MCF 10A (cell line): ENCODE measurements at regions of chrX and their contacts with region 1.

Region 1: DNA sequence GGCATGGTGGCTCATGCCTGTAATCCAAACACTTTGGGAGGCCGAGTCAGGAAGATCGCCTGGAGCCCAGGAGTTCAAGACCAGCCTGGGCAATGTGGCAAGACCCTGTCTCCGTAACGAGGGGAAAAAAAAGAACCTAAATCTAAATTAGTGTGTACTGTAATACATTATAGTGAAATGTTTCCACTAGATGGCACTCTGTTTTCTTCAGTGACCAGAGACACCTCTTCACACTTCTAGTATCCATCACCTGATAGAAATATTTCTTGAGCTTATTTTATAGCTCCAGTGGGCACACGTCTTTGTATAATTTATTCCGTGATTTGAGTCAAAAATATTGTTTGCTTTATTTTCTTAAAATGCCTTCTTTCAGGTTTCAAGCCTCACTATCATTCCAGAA is 600.9 kb upstream of the DIPK2B start:
- DNase-seq: peak; percentile 66
- H3K4me3 Mint-ChIP-seq: peak overlapping the region; percentile 47
- H3K27ac Mint-ChIP-seq: peak overlapping the region; percentile 67
- H3K4me1 Mint-ChIP-seq: peaks cover 24% of the 10 kb centered on the region
- H3K27me3 Mint-ChIP-seq: peaks cover 49% of the 10 kb centered on the region
- CTCF ChIP-seq: peak; percentile 46

Region 2: DNA sequence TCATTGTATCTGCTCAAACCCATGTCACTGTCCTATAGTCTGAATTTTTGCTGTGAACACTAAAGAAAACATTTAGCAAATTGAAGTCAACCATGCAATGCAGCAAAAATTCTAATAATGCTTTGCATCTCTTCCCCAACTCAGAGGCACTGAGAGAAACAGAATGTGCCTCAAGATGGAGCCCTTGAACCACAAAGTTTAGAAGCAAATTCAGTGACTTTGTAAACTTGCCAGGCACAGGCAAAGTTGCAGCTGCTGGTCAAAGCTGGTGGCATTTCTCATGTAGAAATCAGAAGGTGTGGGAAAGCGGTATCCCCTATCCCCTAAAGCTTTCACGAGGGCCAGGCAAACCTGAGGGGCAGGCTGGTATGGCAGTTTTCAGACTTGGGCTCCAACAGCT is 479.2 kb before region 1 on chrX:
- CTCF ChIA-PET with region 1: interaction called, 6 read pairs
- POLR2A ChIA-PET with region 1: interaction called, 3 read pairs
- intact Hi-C with region 1: loop called (anchors 1 kb)
- DNase-seq: peak; percentile 77
- H3K4me3 Mint-ChIP-seq: no peak overlapping the region
- H3K27ac Mint-ChIP-seq: no peak overlapping the region
- H3K4me1 Mint-ChIP-seq: no peaks in the 10 kb centered on the region
- H3K27me3 Mint-ChIP-seq: peaks cover 68% of the 10 kb centered on the region
- CTCF ChIP-seq: peak; percentile 63

Region 3: GRCh38 chrX:45435481-45435880 is 366.1 kb before region 1 on chrX:
- CTCF ChIA-PET with region 1: no interaction called
- POLR2A ChIA-PET with region 1: no interaction called
- intact Hi-C with region 1: no loop called
- DNase-seq: no peak
- H3K4me3 Mint-ChIP-seq: no peak overlapping the region
- H3K27ac Mint-ChIP-seq: no peak overlapping the region
- H3K4me1 Mint-ChIP-seq: no peaks in the 10 kb centered on the region
- H3K27me3 Mint-ChIP-seq: peaks cover 56% of the 10 kb centered on the region
- CTCF ChIP-seq: no peak

Region 4: GRCh38 chrX:45769761-45770582 is 31.6 kb before region 1 on chrX:
- CTCF ChIA-PET with region 1: interaction called, 5 read pairs
- POLR2A ChIA-PET with region 1: interaction called, 88 read pairs
- intact Hi-C with region 1: loop called (anchors 2 kb)
- DNase-seq: peak; percentile 83
- H3K4me3 Mint-ChIP-seq: peak overlapping the region; percentile 74
- H3K27ac Mint-ChIP-seq: peak overlapping the region; percentile 85
- H3K4me1 Mint-ChIP-seq: peaks cover 2% of the 10 kb centered on the region
- H3K27me3 Mint-ChIP-seq: peaks cover 74% of the 10 kb centered on the region
- CTCF ChIP-seq: no peak

Region 5: DNA sequence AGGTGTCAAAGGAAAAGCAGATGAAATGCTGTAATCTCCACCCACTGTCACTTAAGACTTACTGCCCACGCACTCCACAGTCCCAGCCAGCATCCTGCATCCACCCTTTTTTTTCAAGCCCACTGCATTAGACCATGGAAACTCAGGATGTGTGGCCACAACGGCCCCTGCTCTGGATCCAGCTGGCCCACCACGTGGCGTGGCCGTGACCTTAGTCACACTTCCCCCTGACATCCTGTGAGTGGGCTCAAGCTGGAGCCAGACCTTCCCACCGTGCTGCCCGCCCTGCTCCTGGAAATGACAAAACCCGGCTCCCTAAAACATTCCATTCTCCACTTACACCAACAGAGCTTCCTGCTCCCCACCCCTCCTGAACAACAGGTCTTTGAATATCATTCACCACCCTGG is 12.6 kb before region 1 on chrX:
- CTCF ChIA-PET with region 1: interaction called, 6 read pairs
- POLR2A ChIA-PET with region 1: interaction called, 18 read pairs
- intact Hi-C with region 1: no loop called
- DNase-seq: no peak
- H3K4me3 Mint-ChIP-seq: peak overlapping the region; percentile 68
- H3K27ac Mint-ChIP-seq: peak overlapping the region; percentile 95
- H3K4me1 Mint-ChIP-seq: peaks cover 18% of the 10 kb centered on the region
- H3K27me3 Mint-ChIP-seq: peaks cover 75% of the 10 kb centered on the region
- CTCF ChIP-seq: no peak

Region 6: GRCh38 chrX:46260513-46260912 is 459.0 kb after region 1 on chrX:
- CTCF ChIA-PET with region 1: interaction called, 5 read pairs
- POLR2A ChIA-PET with region 1: interaction called, 12 read pairs
- intact Hi-C with region 1: no loop called
- DNase-seq: peak; percentile 82
- H3K4me3 Mint-ChIP-seq: no peak overlapping the region
- H3K27ac Mint-ChIP-seq: peak overlapping the region; percentile 77
- H3K4me1 Mint-ChIP-seq: peaks cover 16% of the 10 kb centered on the region
- H3K27me3 Mint-ChIP-seq: peaks cover 32% of the 10 kb centered on the region
- CTCF ChIP-seq: no peak

Region 7: DNA sequence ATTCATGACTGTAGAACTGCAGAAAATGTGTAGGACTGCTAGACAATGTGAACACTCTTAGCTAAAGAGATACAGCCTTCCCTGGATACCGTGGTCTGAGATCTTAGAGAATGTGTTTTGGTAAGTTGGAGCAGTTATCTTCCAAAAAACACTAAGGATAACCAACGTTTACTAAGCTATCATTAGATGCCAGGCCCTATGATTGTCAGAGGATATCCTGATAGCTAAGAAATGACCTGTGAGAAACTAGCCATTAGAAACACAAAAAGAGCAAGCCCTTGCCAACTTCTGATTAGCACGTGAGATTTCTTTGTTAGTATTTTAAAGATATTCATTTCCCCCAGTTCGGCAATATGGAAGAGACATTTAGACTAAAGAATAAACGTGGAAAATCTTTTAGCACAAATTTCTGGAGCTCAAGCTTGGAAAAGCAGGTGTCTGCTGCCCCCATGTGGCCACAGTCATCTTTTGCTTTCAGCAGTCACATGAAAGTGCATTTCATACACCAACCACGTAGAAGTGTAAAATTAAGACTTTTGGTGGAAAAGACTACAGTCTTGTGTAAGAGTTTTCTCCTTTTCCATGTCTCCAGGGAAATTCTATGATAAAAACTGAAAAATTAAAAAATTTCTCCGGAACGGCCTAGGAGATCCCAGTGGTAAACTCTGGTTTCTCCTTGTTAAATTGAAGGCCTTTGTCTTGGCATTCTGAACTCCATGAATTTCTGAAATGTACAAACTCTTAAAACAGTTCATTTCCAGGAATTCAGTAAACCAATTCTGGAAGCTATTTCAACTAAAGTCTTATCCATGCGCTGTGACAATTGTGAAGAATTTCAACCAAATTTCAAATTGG is 607.2 kb after region 1 on chrX:
- CTCF ChIA-PET with region 1: interaction called, 5 read pairs
- POLR2A ChIA-PET with region 1: no interaction called
- intact Hi-C with region 1: loop called (anchors 2 kb)
- DNase-seq: peak; percentile 72
- H3K4me3 Mint-ChIP-seq: no peak overlapping the region
- H3K27ac Mint-ChIP-seq: no peak overlapping the region
- H3K4me1 Mint-ChIP-seq: no peaks in the 10 kb centered on the region
- H3K27me3 Mint-ChIP-seq: peaks cover 14% of the 10 kb centered on the region
- CTCF ChIP-seq: peak; percentile 80